Dorsolateral prefrontal cortex (tissue), 120 donors: ENCODE measurements at regions of chr6 and their contacts with region 1.

Region 1: DNA sequence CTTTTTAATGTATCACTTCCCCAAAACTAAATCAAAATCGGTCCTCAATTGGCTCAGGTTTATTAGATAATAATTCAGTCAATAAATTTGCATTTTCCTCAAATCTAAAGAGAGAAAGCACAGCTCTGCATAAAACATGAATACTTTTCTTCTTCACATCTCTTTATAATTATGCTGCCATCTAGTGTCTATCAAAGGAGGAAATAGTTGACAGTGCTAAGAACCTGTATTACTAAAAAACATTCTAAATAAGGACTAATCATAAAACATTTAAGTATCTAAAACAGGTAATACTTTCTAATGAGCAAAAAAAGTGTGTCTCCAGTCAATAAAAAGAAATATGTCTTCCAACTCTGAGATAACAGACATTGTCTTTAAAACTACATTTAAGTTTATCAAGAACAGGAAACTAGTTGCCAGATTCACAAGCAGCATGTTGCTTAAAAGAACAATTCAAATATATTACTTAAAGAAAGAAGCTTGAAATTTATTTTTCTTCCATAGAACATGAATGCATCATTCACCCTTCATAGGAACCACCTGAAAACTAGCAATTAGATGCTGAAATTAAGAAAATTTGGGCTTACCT is 56.5 kb upstream of the DST start:
- DNase-seq: no peak
- H3K4me3 ChIP-seq: no peak overlapping the region
- H3K27ac ChIP-seq: peak overlapping the region in 36 of 59 donors; percentile 0 to 89 (median 44)
- H3K27me3 ChIP-seq: no peaks in the 10 kb centered on the region
- CTCF ChIP-seq: peak in 55 of 56 donors; percentile 51 to 93 (median 74)

Region 2: DNA sequence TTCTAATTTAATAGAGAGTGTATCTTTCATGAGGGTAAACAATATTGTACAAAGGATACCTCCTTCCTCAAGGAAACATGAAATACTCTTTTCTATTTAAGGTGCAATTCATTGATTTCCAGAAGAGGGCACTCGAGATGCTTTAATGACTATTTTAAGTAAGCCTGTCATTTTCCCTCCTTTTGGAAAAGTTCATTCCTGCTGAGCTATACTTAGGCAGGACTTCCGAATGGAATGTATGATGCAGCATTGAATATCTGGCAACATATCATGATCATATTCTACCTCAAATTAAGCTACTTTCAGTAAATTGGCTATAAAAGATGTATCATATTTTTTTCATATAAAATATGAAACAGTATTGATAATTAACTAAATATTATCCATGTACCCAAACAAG is 61.5 kb before region 1 on chr6:
- intact Hi-C with region 1: loop called (anchors 2 to 5 kb)
- DNase-seq: no peak
- H3K4me3 ChIP-seq: no peak overlapping the region
- H3K27ac ChIP-seq: peak overlapping the region in 46 of 59 donors; percentile 2 to 83 (median 58)
- H3K27me3 ChIP-seq: no peaks in the 10 kb centered on the region
- CTCF ChIP-seq: peak; percentile 59 to 94 (median 79)

Region 3: DNA sequence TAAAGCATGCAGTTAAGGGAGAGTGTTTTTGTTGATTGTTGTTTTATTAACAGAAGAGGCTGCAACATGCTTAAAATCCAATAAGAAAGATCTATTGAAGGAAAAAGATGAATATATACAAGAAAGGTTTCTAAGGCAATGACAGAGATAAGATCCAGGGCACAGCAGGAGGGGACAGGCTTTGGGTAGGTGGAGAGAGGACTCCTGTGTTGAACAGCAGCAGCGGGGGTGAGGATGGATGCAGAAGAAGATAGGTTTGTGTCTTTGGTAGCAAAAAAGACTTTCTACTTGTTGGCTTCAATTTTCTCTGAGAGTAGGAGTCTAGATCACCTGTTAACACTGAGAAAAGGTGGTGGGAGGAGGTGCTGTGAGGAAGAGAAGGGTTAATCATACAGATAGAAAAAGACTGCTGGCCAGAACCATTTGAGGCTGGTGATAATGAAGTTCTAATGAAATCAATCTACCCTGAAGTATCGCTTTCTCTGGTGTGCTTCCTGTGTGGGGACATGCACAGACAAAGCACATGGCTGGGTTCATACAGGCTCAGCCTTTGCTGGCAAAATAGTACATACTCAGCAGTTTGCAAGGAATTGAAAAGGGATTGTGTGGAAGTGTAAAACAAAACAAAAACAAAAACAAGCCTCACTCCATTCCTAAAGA is 39.3 kb before region 1 on chr6:
- intact Hi-C with region 1: loop called in 1 of 2 experiments (anchors 5 kb)
- DNase-seq: peak in 2 of 10 donors; percentile 48 to 52
- H3K4me3 ChIP-seq: no peak overlapping the region
- H3K27ac ChIP-seq: peak overlapping the region in 52 of 59 donors; percentile 1 to 98 (median 56)
- H3K27me3 ChIP-seq: no peaks in the 10 kb centered on the region
- CTCF ChIP-seq: no peak

Region 4: GRCh38 chr6:56742122-56742791 is 43.1 kb after region 1 on chr6:
- intact Hi-C with region 1: no loop called
- DNase-seq: no peak
- H3K4me3 ChIP-seq: peak overlapping the region in 40 of 59 donors; percentile 1 to 54 (median 24)
- H3K27ac ChIP-seq: peak overlapping the region in 49 of 59 donors; percentile 0 to 79 (median 44)
- H3K27me3 ChIP-seq: no peaks in the 10 kb centered on the region
- CTCF ChIP-seq: peak in 1 of 56 donors; percentile 16